Dendritic cell treated with granulocyte-macrophage colony-stimulating factor and Interleukin-4, amounts not matched to agents 40 ng/mL and 50 ng/mL, for 4 days (primary cell): ENCODE measurements at regions of chr10 and their contacts with region 1.

Region 1: DNA sequence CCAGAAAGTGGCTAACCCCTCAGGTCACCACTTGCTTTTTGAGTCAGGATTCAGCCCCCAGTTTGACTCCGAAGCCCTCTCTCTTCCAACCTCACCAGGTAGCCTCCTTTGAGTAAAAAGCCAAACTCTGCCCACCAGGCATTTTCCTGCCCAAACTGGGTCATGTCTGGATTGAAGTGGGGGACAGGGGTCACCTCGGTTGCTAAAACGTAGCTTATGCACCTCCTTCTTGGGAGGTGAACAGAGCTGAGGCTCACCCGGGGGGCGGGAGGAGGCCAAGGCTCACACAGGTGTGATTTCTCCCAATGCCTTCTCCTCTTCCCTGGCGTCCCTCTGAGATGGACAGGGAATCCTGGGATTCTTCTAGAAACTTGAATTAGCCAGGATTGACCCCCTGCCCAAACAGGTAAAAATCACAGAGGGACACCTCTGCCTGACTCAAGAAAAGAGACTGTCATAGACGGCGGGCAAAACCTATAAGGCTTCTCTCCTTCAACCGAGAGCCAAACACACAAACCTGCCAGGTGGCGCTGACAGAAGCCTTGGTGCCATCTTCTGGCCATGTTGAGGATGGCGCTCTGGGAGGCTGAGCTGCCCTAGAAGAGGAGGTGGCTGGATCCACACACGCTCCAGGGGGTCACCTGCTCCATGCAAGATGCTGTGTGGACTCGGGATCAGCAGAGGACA is 51.6 kb downstream of the PRLHR start:
- H3K4me3 Mint-ChIP-seq: no peak overlapping the region
- H3K27ac Mint-ChIP-seq: no peak overlapping the region
- H3K4me1 Mint-ChIP-seq: peaks cover 23% of the 10 kb centered on the region
- H3K27me3 Mint-ChIP-seq: peaks cover 65% of the 10 kb centered on the region

Region 2: DNA sequence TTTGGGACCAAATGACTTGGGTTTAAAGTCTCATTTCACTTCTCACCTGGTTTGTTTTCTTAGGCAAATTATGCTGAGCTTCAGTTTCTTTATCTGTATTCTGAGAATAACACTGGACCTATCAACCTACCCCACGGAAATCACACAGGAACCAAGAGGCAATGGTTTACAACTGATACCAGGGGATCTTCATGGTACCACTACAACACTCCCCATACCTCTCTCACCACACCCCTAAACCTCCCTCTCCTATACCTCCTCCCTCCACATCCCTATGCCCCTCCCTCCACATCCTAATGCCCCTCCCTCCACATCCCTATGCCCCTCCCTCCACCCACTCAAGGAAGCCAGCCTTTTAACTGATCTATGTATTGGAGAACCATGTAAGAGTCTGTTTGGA is 211.6 kb before region 1 on chr10:
- intact Hi-C with region 1: loop called (anchors 10 kb)
- H3K4me3 Mint-ChIP-seq: no peak overlapping the region
- H3K27ac Mint-ChIP-seq: no peak overlapping the region
- H3K4me1 Mint-ChIP-seq: no peaks in the 10 kb centered on the region
- H3K27me3 Mint-ChIP-seq: no peaks in the 10 kb centered on the region

Region 3: DNA sequence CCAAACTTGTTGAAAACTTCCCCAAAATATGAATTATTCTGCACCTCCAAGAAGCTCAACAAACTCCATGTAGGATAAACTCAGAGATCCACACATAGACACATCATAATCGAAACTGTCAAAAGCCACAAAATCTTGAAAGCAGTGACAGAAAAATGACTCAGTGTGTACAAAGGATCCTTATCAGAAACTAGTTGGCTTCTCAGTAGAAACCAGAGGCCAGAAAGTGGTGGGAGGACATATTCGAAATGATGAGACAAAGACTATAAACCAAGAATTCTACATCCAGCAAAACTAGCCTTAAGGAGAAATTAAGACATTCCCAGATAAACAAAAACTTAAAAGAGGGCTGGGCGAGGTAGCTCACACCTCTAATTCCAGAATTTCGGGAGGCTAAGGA is 1290.3 kb after region 1 on chr10:
- intact Hi-C with region 1: no loop called
- H3K4me3 Mint-ChIP-seq: no peak overlapping the region
- H3K27ac Mint-ChIP-seq: no peak overlapping the region
- H3K4me1 Mint-ChIP-seq: no peaks in the 10 kb centered on the region
- H3K27me3 Mint-ChIP-seq: no peaks in the 10 kb centered on the region